Left colon (tissue), 2 donors: ENCODE measurements at regions of chr12 and their contacts with region 1.

Region 1: DNA sequence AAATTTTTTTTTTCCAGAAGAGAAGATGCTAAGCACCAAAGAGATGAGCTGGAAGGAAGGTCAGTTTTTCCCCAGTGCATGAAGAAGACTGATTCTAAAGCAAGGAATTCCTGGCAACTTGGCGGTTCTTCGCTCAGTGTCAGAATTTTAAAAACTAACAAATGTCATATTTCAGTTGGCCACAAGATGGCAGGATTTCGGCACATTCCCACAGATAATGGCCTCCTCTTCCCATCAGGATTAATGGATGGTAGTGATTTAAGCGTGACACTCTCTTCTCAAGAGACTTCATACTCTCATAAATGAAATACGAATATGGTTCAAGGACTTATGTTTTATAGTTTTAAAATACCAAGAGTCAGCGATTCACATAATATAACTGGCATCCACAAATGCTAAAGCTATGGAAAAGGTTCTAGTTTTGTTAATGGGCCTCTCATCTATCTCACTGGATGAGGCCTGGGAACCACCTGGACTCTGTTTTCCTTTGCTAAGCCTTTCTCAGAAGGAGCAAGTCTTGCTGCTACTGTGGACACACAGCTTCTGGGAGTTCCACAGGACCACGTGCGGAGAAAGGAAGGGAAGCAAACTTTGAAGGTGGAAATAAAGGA is 46.1 kb upstream of the PTPRO start:
- DNase-seq: no peak
- ATAC-seq: peak; percentile 69

Region 2: GRCh38 chr12:15522565-15523187 is 246.5 kb after region 1 on chr12:
- intact Hi-C with region 1: loop called (anchors 5 to 10 kb)
- DNase-seq: no peak
- ATAC-seq: peak; percentile 40

Region 3: GRCh38 chr12:15584366-15585041 is 308.3 kb after region 1 on chr12:
- intact Hi-C with region 1: loop called in 1 of 2 experiments (anchors 5 kb)
- DNase-seq: peak in 1 of 2 donors; percentile 38
- ATAC-seq: peak; percentile 20

Region 4: DNA sequence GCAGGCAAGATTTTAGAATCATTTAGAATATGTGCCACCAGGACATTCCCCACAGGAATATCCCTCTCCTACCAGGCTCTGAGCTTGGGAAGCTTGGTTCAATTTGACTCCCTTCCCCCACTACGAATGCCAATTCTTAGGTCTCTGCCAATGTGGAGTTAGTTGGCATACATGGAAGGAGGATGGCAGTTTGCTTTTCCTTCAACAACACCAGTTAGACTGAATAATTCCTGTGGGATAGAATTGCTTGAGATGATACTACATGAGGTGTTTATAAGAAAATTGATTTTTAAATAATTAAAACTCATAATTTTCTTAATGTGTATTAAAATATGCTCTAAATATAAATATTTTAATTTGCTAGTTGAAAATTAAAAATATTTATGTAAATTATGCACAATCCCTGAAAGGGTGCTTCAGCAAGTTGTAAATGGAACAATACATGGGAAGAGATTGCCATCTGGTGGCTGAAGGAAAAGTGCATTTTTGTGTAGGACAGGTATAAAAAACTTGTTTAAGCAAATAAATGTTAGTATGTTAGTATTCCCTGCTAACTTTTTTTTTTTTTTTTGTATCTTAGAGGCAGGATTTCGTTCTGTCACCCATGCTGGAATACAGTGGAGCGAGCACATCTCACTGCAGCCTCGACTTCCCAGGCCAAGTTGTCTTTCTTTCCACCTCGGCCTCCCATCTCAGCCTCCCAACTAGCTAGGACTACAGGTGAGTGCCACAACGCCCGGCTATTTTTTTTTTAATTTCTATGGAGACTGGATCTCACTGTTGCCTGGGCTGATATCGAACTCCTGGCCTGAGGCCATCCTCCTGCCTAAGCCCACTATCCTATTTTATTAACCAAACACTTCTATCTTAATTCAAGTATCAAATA is 580.1 kb after region 1 on chr12:
- intact Hi-C with region 1: loop called in 1 of 2 experiments (anchors 10 kb)
- DNase-seq: no peak
- ATAC-seq: peak; percentile 75